Common myeloid progenitor, CD34-positive (primary cell): ENCODE measurements at regions of chr15 and their contacts with region 1.

Region 1: DNA sequence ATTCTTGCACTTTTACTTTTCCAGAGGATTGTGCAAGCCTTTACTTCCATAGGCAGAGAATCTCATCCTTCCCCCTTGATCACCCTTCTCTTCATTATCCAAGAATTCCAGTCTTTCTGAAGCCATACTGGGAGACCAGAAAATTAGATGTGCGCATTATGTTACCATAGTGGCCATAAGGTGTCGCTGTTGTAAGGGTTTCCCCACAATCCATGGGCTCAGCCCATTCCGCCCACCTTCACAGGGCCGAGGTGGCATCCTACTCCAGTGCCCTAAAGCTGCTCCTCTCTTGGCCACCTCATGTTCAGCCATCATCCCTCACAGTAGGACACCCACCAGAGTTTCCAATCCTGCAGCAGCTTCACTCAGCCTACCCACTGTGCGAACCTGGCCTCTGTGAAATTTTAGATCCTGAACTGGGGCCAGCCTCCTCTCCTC is 35.0 kb downstream of the CTSH start:
- DNase-seq: peak; percentile 34 to 62 (median 59)
- H3K4me3 ChIP-seq: no peak overlapping the region
- H3K27ac ChIP-seq: no peak overlapping the region
- H3K4me1 ChIP-seq: peaks cover 0 to 14% (median 0%) of the 10 kb centered on the region in 4 experiments
- H3K27me3 ChIP-seq: no peaks in the 10 kb centered on the region

Region 2: GRCh38 chr15:78893538-78893937 is 16.3 kb before region 1 on chr15:
- CTCF ChIA-PET with region 1: interaction called, 38 read pairs
- POLR2A ChIA-PET with region 1: interaction called, 5 read pairs
- DNase-seq: no peak
- H3K4me3 ChIP-seq: no peak overlapping the region
- H3K27ac ChIP-seq: no peak overlapping the region
- H3K4me1 ChIP-seq: no peaks in the 10 kb centered on the region
- H3K27me3 ChIP-seq: no peaks in the 10 kb centered on the region

Region 3: GRCh38 chr15:78925956-78926670 is 16.3 kb after region 1 on chr15:
- CTCF ChIA-PET with region 1: interaction called, 11 read pairs
- POLR2A ChIA-PET with region 1: no interaction called
- DNase-seq: no peak
- H3K4me3 ChIP-seq: no peak overlapping the region
- H3K27ac ChIP-seq: no peak overlapping the region
- H3K4me1 ChIP-seq: no peaks in the 10 kb centered on the region
- H3K27me3 ChIP-seq: no peaks in the 10 kb centered on the region

Region 4: GRCh38 chr15:78979456-78980320 is 69.9 kb after region 1 on chr15:
- CTCF ChIA-PET with region 1: interaction called, 19 read pairs
- POLR2A ChIA-PET with region 1: no interaction called
- DNase-seq: peak; percentile 33 to 59 (median 56)
- H3K4me3 ChIP-seq: no peak overlapping the region
- H3K27ac ChIP-seq: no peak overlapping the region
- H3K4me1 ChIP-seq: peaks cover 0 to 45% (median 4%) of the 10 kb centered on the region in 4 experiments
- H3K27me3 ChIP-seq: no peaks in the 10 kb centered on the region

Region 5: GRCh38 chr15:79004336-79004735 is 94.5 kb after region 1 on chr15:
- CTCF ChIA-PET with region 1: interaction called, 65 read pairs
- POLR2A ChIA-PET with region 1: no interaction called
- DNase-seq: peak; percentile 75 to 95 (median 92)
- H3K4me3 ChIP-seq: no peak overlapping the region
- H3K27ac ChIP-seq: no peak overlapping the region
- H3K4me1 ChIP-seq: peaks cover 7 to 37% (median 18%) of the 10 kb centered on the region in 4 experiments
- H3K27me3 ChIP-seq: no peaks in the 10 kb centered on the region

Region 6: GRCh38 chr15:79028411-79028964 is 118.7 kb after region 1 on chr15:
- CTCF ChIA-PET with region 1: interaction called, 14 read pairs
- POLR2A ChIA-PET with region 1: no interaction called
- DNase-seq: peak; percentile 31 to 58 (median 44)
- H3K4me3 ChIP-seq: no peak overlapping the region
- H3K27ac ChIP-seq: no peak overlapping the region
- H3K4me1 ChIP-seq: peaks cover 0 to 8% (median 4%) of the 10 kb centered on the region in 4 experiments
- H3K27me3 ChIP-seq: no peaks in the 10 kb centered on the region

Region 7: DNA sequence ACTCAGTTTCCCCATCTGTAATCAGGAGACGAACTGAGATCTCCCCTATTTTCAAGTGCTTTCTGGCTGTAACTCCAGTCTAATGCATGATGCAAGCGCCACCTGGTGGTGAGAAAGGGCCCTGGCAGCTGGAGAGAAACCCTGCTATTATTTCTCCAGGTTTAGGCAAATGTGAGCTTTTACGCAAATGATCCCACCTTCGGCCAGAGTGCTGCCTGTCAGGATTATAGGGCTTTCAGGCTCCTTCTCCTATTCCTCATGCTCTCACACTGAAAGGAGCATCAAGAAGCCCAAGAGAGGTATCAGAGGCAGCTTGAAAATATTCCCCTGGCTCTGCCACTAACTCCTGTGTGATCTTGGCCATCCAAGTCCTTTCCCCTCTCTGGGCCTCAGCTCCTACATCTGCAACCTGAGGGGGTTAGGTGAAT is 274.7 kb after region 1 on chr15:
- CTCF ChIA-PET with region 1: interaction called, 39 read pairs
- POLR2A ChIA-PET with region 1: no interaction called
- DNase-seq: peak; percentile 50 to 72 (median 65)
- H3K4me3 ChIP-seq: no peak overlapping the region
- H3K27ac ChIP-seq: no peak overlapping the region
- H3K4me1 ChIP-seq: no peaks in the 10 kb centered on the region
- H3K27me3 ChIP-seq: no peaks in the 10 kb centered on the region